ENCODE measurements at regions of chr11 and their contacts with region 1.

Region 1: GRCh38 chr11:11407065-11407762 is 54.2 kb upstream of the CSNK2A3 start:
- DNase-seq: no peak
- ATAC-seq: peak; percentile 85

Region 2: GRCh38 chr11:11463405-11463804 is 56.2 kb after region 1 on chr11:
- intact Hi-C with region 1: loop called (anchors 1 kb)
- DNase-seq: no peak
- ATAC-seq: no peak

Region 3: DNA sequence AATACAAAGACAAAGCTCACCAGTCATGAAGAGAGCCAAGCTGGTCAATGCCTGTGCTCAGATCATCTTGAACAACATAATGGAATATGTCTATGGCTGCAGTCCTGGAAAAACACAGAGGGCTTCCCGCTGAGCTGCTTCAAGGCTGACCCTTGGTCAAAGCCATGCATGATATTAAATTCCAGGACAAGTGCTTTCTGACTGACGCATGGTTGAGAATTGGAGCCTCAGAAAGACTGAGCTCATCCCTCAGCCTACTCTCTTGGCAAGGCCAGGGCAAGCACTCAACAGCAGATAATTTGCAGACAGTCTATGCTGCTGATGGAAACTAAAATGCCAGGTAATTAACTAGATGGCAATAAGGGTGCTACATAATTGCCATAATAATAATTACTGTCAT is 125.4 kb after region 1 on chr11:
- intact Hi-C with region 1: loop called (anchors 2 kb)
- DNase-seq: no peak
- ATAC-seq: peak; percentile 21